Activated B cell treated with CpG ODN at 0.5 μM for 24 hours (primary cell): ENCODE measurements at regions of chr10 and their contacts with region 1.

Region 1: DNA sequence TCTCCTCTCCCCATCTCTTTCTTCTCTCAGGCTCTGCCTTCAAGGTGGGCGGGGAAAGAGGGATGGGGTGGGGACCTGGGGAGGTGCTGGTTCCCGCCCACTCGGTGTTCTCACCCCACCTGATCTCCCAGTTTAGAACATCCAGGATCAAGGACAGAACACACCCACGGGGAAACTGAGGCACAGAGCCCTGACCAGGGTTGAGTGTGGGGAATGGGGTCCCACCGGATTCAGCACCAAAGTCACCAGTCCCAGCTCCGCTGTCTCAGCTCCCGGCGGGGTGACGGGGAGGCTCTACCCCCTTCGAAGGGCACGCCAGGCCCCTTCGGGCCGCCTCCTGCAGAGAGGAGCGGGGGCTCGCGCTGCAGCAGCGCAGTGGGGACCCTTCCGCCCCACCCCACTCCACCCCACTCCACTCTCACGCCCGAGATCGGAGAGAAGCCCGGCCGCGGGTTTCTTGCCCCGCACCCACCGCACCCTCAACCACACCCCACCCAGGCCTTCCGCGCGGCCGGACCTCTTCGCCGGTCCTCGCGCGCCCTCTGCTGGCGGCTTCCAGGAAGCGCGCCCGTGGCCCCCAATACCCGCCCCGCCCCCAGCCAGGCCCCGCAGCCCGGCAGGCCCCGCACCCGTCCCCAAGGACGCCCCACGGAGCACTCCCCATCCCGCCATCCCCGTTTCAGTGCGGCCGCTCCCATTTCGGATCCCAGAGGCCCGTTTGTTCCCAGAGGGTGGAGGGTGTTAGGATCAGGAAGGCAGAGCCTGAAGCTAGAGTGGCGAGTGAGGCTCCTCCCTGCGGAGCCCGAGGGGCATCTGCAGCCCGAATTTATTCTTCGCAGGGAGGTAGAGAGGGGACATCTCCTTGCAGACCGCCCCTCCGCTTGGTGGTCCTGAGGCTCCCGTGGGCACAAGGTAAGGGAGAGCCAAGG is 18.0 kb downstream of the POLL start:
- DNase-seq: peak; percentile 83
- ATAC-seq: peak; percentile 89
- H3K4me3 Mint-ChIP-seq: peak overlapping the region; percentile 84
- H3K27ac Mint-ChIP-seq: no peak overlapping the region
- H3K4me1 Mint-ChIP-seq: peaks cover 22% of the 10 kb centered on the region
- H3K27me3 Mint-ChIP-seq: peaks cover 40% of the 10 kb centered on the region
- CTCF ChIP-seq: no peak

Region 2: GRCh38 chr10:101060036-101060950 is 509.8 kb before region 1 on chr10:
- CTCF ChIA-PET with region 1: no interaction called
- POLR2A ChIA-PET with region 1: no interaction called
- intact Hi-C with region 1: loop called (anchors 10 kb)
- DNase-seq: peak; percentile 79
- ATAC-seq: peak; percentile 65
- H3K4me3 Mint-ChIP-seq: peak overlapping the region; percentile 98
- H3K27ac Mint-ChIP-seq: peak overlapping the region; percentile 95
- H3K4me1 Mint-ChIP-seq: peaks cover 34% of the 10 kb centered on the region
- H3K27me3 Mint-ChIP-seq: peaks cover 6% of the 10 kb centered on the region
- CTCF ChIP-seq: peak; percentile 62

Region 3: GRCh38 chr10:101214446-101215396 is 355.4 kb before region 1 on chr10:
- CTCF ChIA-PET with region 1: interaction called, 32 read pairs
- POLR2A ChIA-PET with region 1: no interaction called
- intact Hi-C with region 1: loop called (anchors 1 kb)
- DNase-seq: peak; percentile 72
- ATAC-seq: peak; percentile 75
- H3K4me3 Mint-ChIP-seq: peak overlapping the region; percentile 60
- H3K27ac Mint-ChIP-seq: peak overlapping the region; percentile 68
- H3K4me1 Mint-ChIP-seq: peaks cover 32% of the 10 kb centered on the region
- H3K27me3 Mint-ChIP-seq: peaks cover 56% of the 10 kb centered on the region
- CTCF ChIP-seq: peak; percentile 73

Region 4: GRCh38 chr10:101353692-101354327 is 216.3 kb before region 1 on chr10 and contains the start of gene BTRC:
- CTCF ChIA-PET with region 1: no interaction called
- POLR2A ChIA-PET with region 1: no interaction called
- intact Hi-C with region 1: loop called (anchors 10 kb)
- DNase-seq: peak; percentile 89
- ATAC-seq: peak; percentile 96
- H3K4me3 Mint-ChIP-seq: peak within 1 kb of the TSS; percentile 99
- H3K27ac Mint-ChIP-seq: peak within 1 kb of the TSS; percentile 90
- H3K4me1 Mint-ChIP-seq: peaks cover 24% of the 10 kb centered on the region
- H3K27me3 Mint-ChIP-seq: peaks cover 18% of the 10 kb centered on the region
- CTCF ChIP-seq: no peak
- total RNA-seq, gene BTRC: 11.8 and 19.4 TPM in 2 replicates

Region 5: DNA sequence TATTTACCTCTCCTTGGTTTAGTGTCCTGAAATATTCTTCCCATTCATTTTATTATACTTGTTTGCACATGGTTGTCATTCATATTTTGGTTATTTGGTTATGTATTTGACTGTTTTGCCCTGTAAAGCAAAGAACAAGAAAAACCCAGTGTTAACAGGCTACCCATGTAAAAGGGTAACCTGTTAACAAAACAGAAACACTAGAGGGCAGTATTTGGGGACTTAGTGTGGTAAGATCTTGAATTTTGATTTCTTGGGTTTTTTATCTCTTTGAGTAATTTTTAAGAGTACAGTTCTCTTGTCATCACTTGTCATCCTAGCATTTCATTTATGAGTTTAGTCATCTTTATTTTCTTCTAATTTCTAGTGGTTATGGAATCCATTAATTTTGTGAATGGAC is 33.3 kb before region 1 on chr10:
- CTCF ChIA-PET with region 1: interaction called, 9 read pairs
- POLR2A ChIA-PET with region 1: no interaction called
- intact Hi-C with region 1: loop called (anchors 1 kb)
- DNase-seq: no peak
- ATAC-seq: no peak
- H3K4me3 Mint-ChIP-seq: no peak overlapping the region
- H3K27ac Mint-ChIP-seq: no peak overlapping the region
- H3K4me1 Mint-ChIP-seq: no peaks in the 10 kb centered on the region
- H3K27me3 Mint-ChIP-seq: no peaks in the 10 kb centered on the region
- CTCF ChIP-seq: no peak